Naive thymus-derived CD4-positive, alpha-beta T cell (primary cell): ENCODE measurements at regions of chr3 and their contacts with region 1.

Region 1: GRCh38 chr3:58188173-58188564 is 22.6 kb downstream of the DNASE1L3 start:
- DNase-seq: no peak
- ATAC-seq: no peak
- H3K4me3 ChIP-seq: no peak overlapping the region
- H3K4me3 Mint-ChIP-seq: no peak overlapping the region
- H3K27ac ChIP-seq: no peak overlapping the region
- H3K27ac Mint-ChIP-seq: no peak overlapping the region
- H3K4me1 ChIP-seq: no peaks in the 10 kb centered on the region
- H3K4me1 Mint-ChIP-seq: peaks cover 0 to 3% (median 0%) of the 10 kb centered on the region in 7 donors
- H3K27me3 ChIP-seq: no peaks in the 10 kb centered on the region
- H3K27me3 Mint-ChIP-seq: no peaks in the 10 kb centered on the region

Region 2: DNA sequence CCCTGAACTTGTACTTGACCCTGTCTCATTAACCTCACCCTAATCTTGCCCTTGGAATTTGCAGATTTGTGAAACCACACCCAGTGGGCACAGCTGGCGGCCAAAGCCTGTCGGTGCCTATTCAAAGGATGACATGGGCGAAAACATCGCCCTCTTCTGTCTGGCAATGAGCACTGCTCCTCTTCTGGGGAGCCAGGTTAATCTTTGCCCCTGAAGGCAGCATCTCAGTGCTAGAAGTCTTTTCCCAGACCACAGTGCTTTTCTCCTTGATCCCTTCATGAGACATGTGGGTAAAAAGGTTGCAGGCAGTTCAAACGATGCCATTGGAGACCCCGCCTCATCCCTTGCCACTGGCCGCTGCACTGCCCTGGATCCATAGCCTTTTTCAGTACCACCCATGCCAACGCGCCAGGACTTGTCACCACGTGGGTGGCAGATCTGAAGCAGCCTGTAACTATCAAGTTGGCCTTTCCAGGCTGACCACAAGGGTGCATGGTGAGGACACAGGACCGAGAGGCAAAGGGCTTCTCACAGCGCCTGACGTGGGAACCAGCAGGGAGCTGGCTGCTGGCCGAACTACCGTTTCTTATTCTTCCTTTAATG is 29.1 kb after region 1 on chr3:
- CTCF ChIA-PET with region 1: interaction called, 19 read pairs
- POLR2A ChIA-PET with region 1: no interaction called
- intact Hi-C with region 1: loop called (anchors 1 kb)
- DNase-seq: peak; percentile 21 to 64 (median 52)
- ATAC-seq: peak; percentile 86
- H3K4me3 ChIP-seq: no peak overlapping the region
- H3K4me3 Mint-ChIP-seq: peak overlapping the region in 4 of 10 donors; percentile 12 to 45 (median 26)
- H3K27ac ChIP-seq: no peak overlapping the region
- H3K27ac Mint-ChIP-seq: no peak overlapping the region
- H3K4me1 ChIP-seq: peaks cover 0 to 3% of the 10 kb centered on the region in 2 donors
- H3K4me1 Mint-ChIP-seq: peaks cover 0 to 17% (median 7%) of the 10 kb centered on the region in 7 donors
- H3K27me3 ChIP-seq: no peaks in the 10 kb centered on the region
- H3K27me3 Mint-ChIP-seq: peaks cover 3 to 10% (median 4%) of the 10 kb centered on the region in 5 donors

Region 3: GRCh38 chr3:58249358-58250092 is 61.4 kb after region 1 on chr3:
- CTCF ChIA-PET with region 1: no interaction called
- POLR2A ChIA-PET with region 1: no interaction called
- intact Hi-C with region 1: no loop called
- DNase-seq: no peak
- ATAC-seq: no peak
- H3K4me3 ChIP-seq: no peak overlapping the region
- H3K4me3 Mint-ChIP-seq: no peak overlapping the region
- H3K27ac ChIP-seq: no peak overlapping the region
- H3K27ac Mint-ChIP-seq: no peak overlapping the region
- H3K4me1 ChIP-seq: no peaks in the 10 kb centered on the region
- H3K4me1 Mint-ChIP-seq: peaks cover 0 to 4% (median 0%) of the 10 kb centered on the region in 7 donors
- H3K27me3 ChIP-seq: no peaks in the 10 kb centered on the region
- H3K27me3 Mint-ChIP-seq: no peaks in the 10 kb centered on the region

Region 4: GRCh38 chr3:58299839-58300516 is 111.8 kb after region 1 on chr3:
- CTCF ChIA-PET with region 1: interaction called, 5 read pairs
- POLR2A ChIA-PET with region 1: no interaction called
- intact Hi-C with region 1: loop called (anchors 1 kb)
- DNase-seq: no peak
- ATAC-seq: peak; percentile 38
- H3K4me3 ChIP-seq: no peak overlapping the region
- H3K4me3 Mint-ChIP-seq: no peak overlapping the region
- H3K27ac ChIP-seq: no peak overlapping the region
- H3K27ac Mint-ChIP-seq: no peak overlapping the region
- H3K4me1 ChIP-seq: no peaks in the 10 kb centered on the region
- H3K4me1 Mint-ChIP-seq: peaks cover 0 to 1% (median 0%) of the 10 kb centered on the region in 7 donors
- H3K27me3 ChIP-seq: no peaks in the 10 kb centered on the region
- H3K27me3 Mint-ChIP-seq: peaks cover 20 to 28% (median 25%) of the 10 kb centered on the region in 5 donors